Heart right ventricle (tissue), 16 donors: ENCODE measurements at regions of chr18 and their contacts with region 1.

Region 1: GRCh38 chr18:41850781-41851180 is 104.3 kb upstream of the PIK3C3 start:
- DNase-seq: no peak
- ATAC-seq: no peak
- H3K4me3 ChIP-seq: no peak overlapping the region
- H3K27ac ChIP-seq: no peak overlapping the region
- H3K4me1 ChIP-seq: no peaks in the 10 kb centered on the region
- H3K27me3 ChIP-seq: no peaks in the 10 kb centered on the region
- CTCF ChIP-seq: no peak

Region 2: DNA sequence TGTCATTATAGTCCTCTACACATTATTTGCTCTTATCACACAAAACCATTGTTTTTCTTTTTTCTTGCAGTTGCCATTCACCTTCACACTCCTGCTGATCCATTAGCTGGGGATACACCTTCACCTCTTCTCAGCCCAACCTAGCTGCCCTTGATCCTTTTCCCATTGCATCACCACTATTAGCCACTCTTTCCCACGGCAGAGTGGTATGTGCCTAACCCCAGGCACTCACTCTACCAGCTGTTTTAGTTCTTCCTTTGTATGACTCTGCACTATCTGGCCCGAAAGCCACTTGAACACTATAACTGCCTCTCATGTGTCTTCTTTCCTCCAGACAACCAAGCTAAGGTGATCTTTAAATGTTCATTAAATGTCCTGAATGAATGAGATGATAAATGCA is 41.1 kb before region 1 on chr18:
- intact Hi-C with region 1: loop called in 1 of 10 experiments (anchors 5 kb)
- DNase-seq: no peak
- ATAC-seq: no peak
- H3K4me3 ChIP-seq: no peak overlapping the region
- H3K27ac ChIP-seq: no peak overlapping the region
- H3K4me1 ChIP-seq: no peaks in the 10 kb centered on the region
- H3K27me3 ChIP-seq: peaks cover 0 to 9% (median 0%) of the 10 kb centered on the region in 7 donors
- CTCF ChIP-seq: no peak